ENCODE measurements at regions of chr3 and their contacts with region 1.

Region 1: GRCh38 chr3:196317687-196318467 is at the start of gene DYNLT2B:
- DNase-seq: peak; percentile 92
- H3K4me3 ChIP-seq: peak within 1 kb of the TSS; percentile 54 to 93 (median 80)
- H3K27ac ChIP-seq: peak within 1 kb of the TSS; percentile 82 to 93 (median 92)
- H3K4me1 ChIP-seq: no peaks in the 10 kb centered on the region
- H3K27me3 ChIP-seq: no peaks in the 10 kb centered on the region
- CTCF ChIP-seq: no peak
- EP300 ChIP-seq: no peak
- POLR2A ChIP-seq: peak; percentile 16 to 48
- total RNA-seq, gene DYNLT2B: 6.8 to 17.8 (median 13.2) TPM

Region 2: GRCh38 chr3:196287440-196288148 is 30.3 kb before region 1 on chr3 and contains the start of gene PCYT1A:
- intact Hi-C with region 1: loop called (anchors 2 kb)
- DNase-seq: peak; percentile 95
- H3K4me3 ChIP-seq: peak within 1 kb of the TSS; percentile 68 to 91 (median 80)
- H3K27ac ChIP-seq: peak within 1 kb of the TSS; percentile 85 to 94 (median 91)
- H3K4me1 ChIP-seq: peaks cover 0 to 39% (median 31%) of the 10 kb centered on the region in 4 donors
- H3K27me3 ChIP-seq: no peaks in the 10 kb centered on the region
- CTCF ChIP-seq: no peak
- EP300 ChIP-seq: no peak
- POLR2A ChIP-seq: peak; percentile 49 to 50
- total RNA-seq, gene PCYT1A: 61.4 to 88.6 (median 72.4) TPM

Region 3: DNA sequence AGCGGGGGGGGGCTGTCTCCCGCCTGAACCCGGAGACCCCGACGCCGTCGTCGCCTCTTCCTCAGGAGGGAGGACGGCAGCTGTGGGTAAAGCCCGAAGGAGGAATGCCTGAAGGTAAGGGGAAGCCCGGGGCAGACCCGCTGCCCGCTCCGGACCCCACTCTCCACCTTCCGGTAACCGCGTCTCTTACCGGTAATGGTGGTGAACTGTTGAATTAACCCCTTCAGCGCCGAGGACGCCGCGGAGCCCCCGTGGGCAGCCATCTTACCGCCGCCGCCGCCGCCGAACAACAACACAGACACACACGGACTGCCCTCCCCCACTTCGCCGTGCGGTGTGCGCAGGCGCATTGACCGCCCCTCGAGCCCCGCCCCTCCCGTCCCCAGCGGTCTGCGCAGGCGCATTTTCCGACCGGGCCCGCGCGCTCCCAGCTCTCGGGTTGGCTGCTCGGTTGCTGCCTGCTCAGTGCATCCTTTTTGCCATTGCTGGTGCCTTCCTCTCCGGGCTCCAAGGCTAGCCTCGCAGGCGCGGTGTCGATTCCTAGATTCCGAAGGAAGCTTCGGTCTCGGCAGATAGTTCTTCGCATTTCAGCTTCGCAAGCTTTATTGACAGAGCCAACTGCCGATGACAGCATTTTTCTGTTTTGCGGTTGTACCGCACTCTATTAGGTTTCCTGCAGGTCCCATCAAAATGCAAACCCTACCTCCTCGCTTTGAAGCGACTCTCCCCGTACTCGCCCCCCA is 114.4 kb after region 1 on chr3 and contains the start of gene UBXN7:
- intact Hi-C with region 1: loop called (anchors 5 kb)
- DNase-seq: peak; percentile 97
- H3K4me3 ChIP-seq: peak within 1 kb of the TSS; percentile 68 to 100 (median 90)
- H3K27ac ChIP-seq: peak within 1 kb of the TSS; percentile 90 to 99 (median 94)
- H3K4me1 ChIP-seq: peaks cover 0 to 24% (median 23%) of the 10 kb centered on the region in 4 donors
- H3K27me3 ChIP-seq: no peaks in the 10 kb centered on the region
- CTCF ChIP-seq: peak in 1 of 4 experiments; percentile 8
- EP300 ChIP-seq: no peak
- POLR2A ChIP-seq: peak; percentile 31 to 52
- total RNA-seq, gene UBXN7: 14.7 to 22.4 (median 16.7) TPM

Region 4: DNA sequence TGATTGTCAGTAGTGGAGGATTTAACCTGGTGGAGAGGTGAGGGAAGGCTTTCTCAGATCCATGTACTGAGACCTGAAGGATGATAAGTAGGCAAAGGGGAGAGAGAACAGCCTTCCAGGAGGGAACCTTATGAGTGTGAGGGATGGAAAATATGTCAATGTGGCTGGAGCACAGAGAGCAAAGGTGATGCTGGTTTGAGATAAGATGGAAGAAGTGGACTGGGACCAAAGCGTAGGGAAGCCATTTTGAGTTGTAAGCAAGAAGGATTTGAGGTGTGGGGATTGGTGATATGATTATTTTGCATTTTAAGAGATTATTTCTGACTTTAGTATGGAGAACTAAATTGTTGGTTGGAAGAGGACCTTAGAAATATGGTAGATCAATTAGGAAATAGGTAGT is 254.5 kb after region 1 on chr3:
- intact Hi-C with region 1: no loop called
- DNase-seq: no peak
- H3K4me3 ChIP-seq: no peak overlapping the region
- H3K27ac ChIP-seq: no peak overlapping the region
- H3K4me1 ChIP-seq: peaks cover 0 to 26% (median 21%) of the 10 kb centered on the region in 4 donors
- H3K27me3 ChIP-seq: no peaks in the 10 kb centered on the region
- CTCF ChIP-seq: no peak
- EP300 ChIP-seq: no peak
- POLR2A ChIP-seq: no peak